Activated CD4-positive, alpha-beta memory T cell treated with anti-CD3 and anti-CD28 coated beads, Interleukin-2, amount 10 ng/mL, durations not matched to agents 7 days and 5 days (primary cell): ENCODE measurements at regions of chr6 and their contacts with region 1.

Region 1: DNA sequence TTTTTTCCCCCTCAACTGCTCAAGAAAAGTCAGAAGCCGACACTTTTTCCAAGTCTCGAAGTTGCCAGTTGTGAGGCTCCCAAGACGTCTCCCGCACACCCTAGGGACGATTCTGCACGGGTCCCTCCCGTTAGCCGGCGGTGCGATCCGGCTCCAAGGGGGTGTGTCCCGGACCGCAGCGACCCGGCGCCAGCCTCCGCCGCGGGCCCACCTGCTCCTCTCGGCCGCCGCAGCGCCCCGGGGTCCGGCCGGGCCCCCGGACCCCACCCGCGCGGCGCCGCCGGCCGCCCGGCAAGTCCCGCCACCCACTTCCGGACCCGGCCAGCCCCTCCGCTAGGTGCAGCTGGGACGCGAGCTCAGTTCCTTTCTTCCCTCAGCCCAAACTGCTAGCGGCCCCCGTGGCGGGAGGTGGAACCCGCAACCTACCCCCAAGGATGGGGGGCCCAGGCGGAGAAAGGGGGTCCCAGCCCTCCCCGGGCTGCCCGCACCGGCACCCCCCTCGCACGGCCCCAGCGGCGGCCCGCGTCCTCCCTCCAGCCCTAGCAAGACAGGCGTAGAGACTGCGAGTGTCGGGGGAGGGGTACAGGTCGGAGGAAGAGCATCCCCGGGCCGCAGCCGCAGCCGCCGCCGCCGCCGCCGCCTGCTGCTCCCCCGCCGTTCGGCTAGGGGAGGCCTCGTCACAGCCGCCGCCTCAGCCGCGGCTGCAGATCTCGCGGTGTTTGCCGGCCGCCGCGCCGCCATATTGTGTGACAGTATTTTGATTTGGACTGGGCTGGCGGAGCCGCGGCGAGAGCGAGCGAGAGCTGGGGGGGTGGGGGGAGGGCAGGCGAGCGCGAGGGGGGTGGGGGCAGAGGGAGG is 485 bp upstream of the TAB2 start:
- DNase-seq: peak; percentile 93
- H3K4me3 Mint-ChIP-seq: peak overlapping the region; percentile 84
- H3K27ac Mint-ChIP-seq: peak overlapping the region; percentile 82
- H3K4me1 Mint-ChIP-seq: peaks cover 27% of the 10 kb centered on the region
- H3K27me3 Mint-ChIP-seq: no peaks in the 10 kb centered on the region

Region 2: GRCh38 chr6:149052350-149053106 is 264.5 kb before region 1 on chr6:
- CTCF ChIA-PET with region 1: no interaction called
- POLR2A ChIA-PET with region 1: no interaction called
- DNase-seq: no peak
- H3K4me3 Mint-ChIP-seq: peak overlapping the region; percentile 64
- H3K27ac Mint-ChIP-seq: peak overlapping the region; percentile 78
- H3K4me1 Mint-ChIP-seq: peaks cover 53% of the 10 kb centered on the region
- H3K27me3 Mint-ChIP-seq: no peaks in the 10 kb centered on the region

Region 3: DNA sequence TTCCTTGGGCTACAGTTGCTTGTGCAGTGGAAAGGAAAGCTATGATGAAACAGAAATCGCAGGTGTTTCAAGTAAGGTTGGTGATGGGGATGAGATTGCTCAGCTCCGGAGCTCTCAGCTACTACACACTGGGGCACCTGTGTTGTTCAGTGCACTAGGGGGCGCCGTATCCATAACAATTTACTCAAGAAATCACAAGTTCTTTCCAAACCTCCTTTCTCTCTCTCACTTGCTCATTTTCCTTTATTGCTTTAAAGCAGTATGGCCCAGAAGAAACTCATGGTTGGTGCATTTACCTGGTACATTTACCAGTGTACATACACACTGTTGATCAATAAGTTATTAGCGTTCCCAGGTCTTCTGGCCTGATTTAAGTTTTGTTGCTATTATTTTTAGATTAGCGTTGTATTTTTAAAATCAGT is 234.7 kb before region 1 on chr6:
- CTCF ChIA-PET with region 1: interaction called, 7 read pairs
- POLR2A ChIA-PET with region 1: interaction called, 235 read pairs
- DNase-seq: peak; percentile 91
- H3K4me3 Mint-ChIP-seq: peak overlapping the region; percentile 50
- H3K27ac Mint-ChIP-seq: peak overlapping the region; percentile 96
- H3K4me1 Mint-ChIP-seq: peaks cover 87% of the 10 kb centered on the region
- H3K27me3 Mint-ChIP-seq: no peaks in the 10 kb centered on the region

Region 4: GRCh38 chr6:149140137-149140909 is 176.7 kb before region 1 on chr6:
- CTCF ChIA-PET with region 1: interaction called, 4 read pairs
- POLR2A ChIA-PET with region 1: interaction called, 94 read pairs
- DNase-seq: peak; percentile 88
- H3K4me3 Mint-ChIP-seq: peak overlapping the region; percentile 77
- H3K27ac Mint-ChIP-seq: peak overlapping the region; percentile 96
- H3K4me1 Mint-ChIP-seq: peaks cover 63% of the 10 kb centered on the region
- H3K27me3 Mint-ChIP-seq: no peaks in the 10 kb centered on the region

Region 5: GRCh38 chr6:149182262-149182661 is 134.8 kb before region 1 on chr6:
- CTCF ChIA-PET with region 1: no interaction called
- POLR2A ChIA-PET with region 1: no interaction called
- DNase-seq: no peak
- H3K4me3 Mint-ChIP-seq: no peak overlapping the region
- H3K27ac Mint-ChIP-seq: no peak overlapping the region
- H3K4me1 Mint-ChIP-seq: peaks cover 8% of the 10 kb centered on the region
- H3K27me3 Mint-ChIP-seq: no peaks in the 10 kb centered on the region

Region 6: GRCh38 chr6:149194820-149195558 is 122.0 kb before region 1 on chr6:
- CTCF ChIA-PET with region 1: no interaction called
- POLR2A ChIA-PET with region 1: interaction called, 10 read pairs
- DNase-seq: no peak
- H3K4me3 Mint-ChIP-seq: peak overlapping the region; percentile 46
- H3K27ac Mint-ChIP-seq: peak overlapping the region; percentile 55
- H3K4me1 Mint-ChIP-seq: peaks cover 36% of the 10 kb centered on the region
- H3K27me3 Mint-ChIP-seq: no peaks in the 10 kb centered on the region

Region 7: GRCh38 chr6:149235130-149235561 is 81.9 kb before region 1 on chr6:
- CTCF ChIA-PET with region 1: no interaction called
- POLR2A ChIA-PET with region 1: interaction called, 14 read pairs
- DNase-seq: no peak
- H3K4me3 Mint-ChIP-seq: no peak overlapping the region
- H3K27ac Mint-ChIP-seq: peak overlapping the region; percentile 93
- H3K4me1 Mint-ChIP-seq: peaks cover 51% of the 10 kb centered on the region
- H3K27me3 Mint-ChIP-seq: no peaks in the 10 kb centered on the region

Region 8: GRCh38 chr6:149306967-149307366 is 10.1 kb before region 1 on chr6:
- CTCF ChIA-PET with region 1: no interaction called
- POLR2A ChIA-PET with region 1: no interaction called
- DNase-seq: no peak
- H3K4me3 Mint-ChIP-seq: no peak overlapping the region
- H3K27ac Mint-ChIP-seq: no peak overlapping the region
- H3K4me1 Mint-ChIP-seq: no peaks in the 10 kb centered on the region
- H3K27me3 Mint-ChIP-seq: peaks cover 2% of the 10 kb centered on the region